ENCODE measurements at regions of chr3 and their contacts with region 1.

Region 1: DNA sequence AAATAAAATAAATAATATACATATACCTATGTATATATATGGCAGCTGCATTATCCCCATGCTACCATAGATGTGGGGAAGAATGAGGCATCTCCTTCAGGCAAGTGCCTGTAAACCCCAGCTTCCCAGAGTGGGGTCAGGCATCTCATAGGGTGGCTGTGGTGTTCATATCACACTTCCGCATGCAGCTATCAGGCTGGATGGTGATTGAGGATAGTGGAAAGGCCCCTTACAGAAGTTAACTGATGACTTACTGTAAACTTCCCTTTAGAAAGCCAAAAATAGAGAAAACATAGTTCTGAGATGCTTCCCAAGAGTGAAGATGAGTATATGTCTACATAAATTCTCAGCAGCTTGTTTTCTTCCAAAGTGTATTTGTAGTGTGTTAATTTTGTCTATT is 3.5 kb upstream of the PP2D1 start:
- DNase-seq: no peak
- H3K4me3 ChIP-seq: no peak overlapping the region
- H3K27ac ChIP-seq: no peak overlapping the region
- H3K4me1 ChIP-seq: no peaks in the 10 kb centered on the region
- CTCF ChIP-seq: no peak

Region 2: GRCh38 chr3:20027136-20027884 is 11.8 kb after region 1 on chr3:
- CTCF ChIA-PET with region 1: no interaction called
- POLR2A ChIA-PET with region 1: interaction called, 12 read pairs
- intact Hi-C with region 1: no loop called
- DNase-seq: no peak
- H3K4me3 ChIP-seq: no peak overlapping the region
- H3K27ac ChIP-seq: no peak overlapping the region
- H3K4me1 ChIP-seq: peaks cover 7% of the 10 kb centered on the region
- CTCF ChIP-seq: no peak

Region 3: GRCh38 chr3:20310629-20311028 is 295.1 kb after region 1 on chr3:
- CTCF ChIA-PET with region 1: no interaction called
- POLR2A ChIA-PET with region 1: no interaction called
- intact Hi-C with region 1: no loop called
- DNase-seq: no peak
- H3K4me3 ChIP-seq: no peak overlapping the region
- H3K27ac ChIP-seq: no peak overlapping the region
- H3K4me1 ChIP-seq: no peaks in the 10 kb centered on the region
- CTCF ChIP-seq: no peak